ENCODE measurements at regions of chr19 and their contacts with region 1.

Region 1: DNA sequence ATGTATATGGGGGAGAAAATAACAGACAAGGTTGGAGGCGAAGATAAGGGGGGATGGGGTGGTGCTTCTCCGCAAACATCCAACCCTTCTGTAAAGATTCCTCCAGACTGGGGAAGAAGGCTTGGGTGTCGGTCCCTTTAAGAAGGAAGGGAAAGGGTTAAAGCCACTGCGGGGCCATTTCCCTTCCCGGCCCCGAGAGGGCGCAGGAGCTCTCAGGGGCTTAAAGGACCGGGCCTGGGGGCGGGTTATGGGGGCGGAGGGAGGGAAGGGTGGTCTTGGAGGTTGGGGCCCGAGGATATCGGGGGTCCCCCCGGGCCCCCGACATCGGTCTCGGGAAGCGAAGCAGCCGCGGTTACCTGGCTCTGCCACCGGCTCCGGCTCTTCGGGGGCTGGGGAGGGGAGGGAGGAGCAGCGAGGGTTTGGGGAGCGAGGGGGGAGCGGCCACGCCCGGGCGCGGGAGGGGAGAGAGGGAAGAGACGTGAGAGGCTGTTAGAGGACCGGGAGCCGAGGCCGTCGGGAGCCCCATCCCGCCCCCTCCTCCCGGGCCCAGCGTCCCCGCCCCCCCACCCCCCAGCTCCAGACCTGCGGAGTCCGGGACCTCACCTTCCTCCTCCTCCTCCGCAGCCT is 2.8 kb downstream of the TNNT1 start:
- DNase-seq: peak; percentile 43
- H3K4me3 Mint-ChIP-seq: no peak overlapping the region
- H3K27ac Mint-ChIP-seq: no peak overlapping the region
- H3K4me1 Mint-ChIP-seq: peaks cover 9% of the 10 kb centered on the region
- H3K27me3 Mint-ChIP-seq: peaks cover 93% of the 10 kb centered on the region

Region 2: DNA sequence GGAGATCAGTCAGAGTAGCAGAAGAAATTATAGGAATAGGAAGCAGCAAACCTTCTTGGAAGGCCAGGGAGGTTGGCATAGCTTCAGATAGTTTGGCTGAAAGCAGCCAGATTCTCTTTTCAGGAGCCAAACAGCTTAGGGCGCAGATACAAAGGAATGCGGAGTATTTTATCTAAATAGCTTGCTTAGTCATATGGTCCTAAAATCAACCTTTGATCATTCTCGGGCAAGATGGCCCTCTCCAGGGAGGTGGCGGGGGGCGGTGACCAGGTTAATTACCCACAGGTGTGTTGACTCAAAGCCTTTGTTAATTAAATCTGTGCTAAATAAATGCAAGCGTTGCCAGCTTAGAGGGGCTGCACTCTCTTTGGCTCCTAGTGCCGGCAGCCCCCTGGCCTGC is 252.8 kb before region 1 on chr19:
- CTCF ChIA-PET with region 1: no interaction called
- DNase-seq: no peak
- H3K4me3 Mint-ChIP-seq: no peak overlapping the region
- H3K27ac Mint-ChIP-seq: no peak overlapping the region
- H3K4me1 Mint-ChIP-seq: no peaks in the 10 kb centered on the region
- H3K27me3 Mint-ChIP-seq: peaks cover 11% of the 10 kb centered on the region

Region 3: DNA sequence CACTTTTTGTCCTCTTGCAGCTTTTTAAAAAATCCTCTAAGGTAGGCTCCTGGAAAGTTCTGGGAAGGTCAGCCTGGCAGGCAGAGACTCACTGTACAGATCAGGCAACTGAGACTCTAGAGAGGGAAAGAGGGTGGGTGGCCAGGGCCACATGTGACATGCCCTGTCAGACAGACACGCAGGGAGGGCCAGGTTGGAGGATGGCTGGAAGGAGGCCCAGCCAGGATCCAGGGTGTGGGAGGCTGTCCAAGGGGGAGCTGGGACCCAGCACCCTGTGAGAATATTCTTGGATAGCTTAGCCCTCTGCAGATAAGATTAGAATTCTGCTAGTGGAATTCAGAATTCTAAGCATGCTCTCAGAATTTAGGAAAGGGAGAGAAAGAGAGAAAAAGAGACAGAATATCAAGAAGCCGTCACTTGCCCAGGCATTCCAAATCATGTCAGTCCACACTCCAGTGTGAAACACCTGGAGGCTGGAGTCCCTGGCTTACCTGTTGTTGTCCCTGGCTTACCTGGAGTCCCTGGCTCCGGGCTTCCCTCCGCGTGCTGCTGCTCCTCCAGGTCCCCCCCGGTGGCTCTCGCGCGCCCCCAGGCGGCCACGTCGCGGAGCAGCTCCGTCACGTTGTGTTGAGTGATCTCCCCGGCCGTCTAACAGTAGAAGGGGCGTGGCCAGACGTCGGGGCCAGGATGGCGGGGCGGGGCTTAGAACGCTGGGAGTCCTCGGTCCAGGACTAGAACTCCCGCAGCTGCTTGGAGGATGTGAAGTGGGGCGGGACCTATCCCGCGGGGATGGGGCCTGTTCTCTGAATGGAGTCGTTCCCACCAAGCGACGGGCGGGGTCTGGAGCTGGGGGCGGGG is 14.2 kb after region 1 on chr19:
- CTCF ChIA-PET with region 1: interaction called, 18 read pairs
- DNase-seq: peak; percentile 92
- H3K4me3 Mint-ChIP-seq: no peak overlapping the region
- H3K27ac Mint-ChIP-seq: no peak overlapping the region
- H3K4me1 Mint-ChIP-seq: peaks cover 9% of the 10 kb centered on the region
- H3K27me3 Mint-ChIP-seq: peaks cover 89% of the 10 kb centered on the region

Region 4: GRCh38 chr19:55312621-55313512 is 166.7 kb after region 1 on chr19:
- CTCF ChIA-PET with region 1: no interaction called
- DNase-seq: no peak
- H3K4me3 Mint-ChIP-seq: no peak overlapping the region
- H3K27ac Mint-ChIP-seq: no peak overlapping the region
- H3K4me1 Mint-ChIP-seq: no peaks in the 10 kb centered on the region
- H3K27me3 Mint-ChIP-seq: peaks cover 3% of the 10 kb centered on the region

Region 5: GRCh38 chr19:55418185-55418584 is 272.0 kb after region 1 on chr19:
- CTCF ChIA-PET with region 1: interaction called, 15 read pairs
- DNase-seq: peak; percentile 72
- H3K4me3 Mint-ChIP-seq: no peak overlapping the region
- H3K27ac Mint-ChIP-seq: no peak overlapping the region
- H3K4me1 Mint-ChIP-seq: peaks cover 32% of the 10 kb centered on the region
- H3K27me3 Mint-ChIP-seq: peaks cover 48% of the 10 kb centered on the region